Activated T-helper 1 cell treated with anti-CD3 and anti-CD28 coated beads, Interleukin-12 subunit alpha, Interleukin-12 subunit beta, Interleukin-2, Interleukin-4 antibody, amounts not matched to agents 30 ng/mL and 10 ng/mL and 1 ng/mL, durations not matched to agents 14 hours and 24 hours and 36 hours (primary cell): ENCODE measurements at regions of chr6 and their contacts with region 1.

Region 1: GRCh38 chr6:96468681-96469224 is 52.9 kb upstream of the UFL1 start:
- DNase-seq: no peak
- H3K4me3 Mint-ChIP-seq: no peak overlapping the region
- H3K27ac Mint-ChIP-seq: no peak overlapping the region
- H3K4me1 Mint-ChIP-seq: peaks cover 33% of the 10 kb centered on the region
- H3K27me3 Mint-ChIP-seq: peaks cover 19% of the 10 kb centered on the region

Region 2: GRCh38 chr6:95364016-95364604 is 1104.6 kb before region 1 on chr6:
- intact Hi-C with region 1: loop called (anchors 10 kb)
- DNase-seq: no peak
- H3K4me3 Mint-ChIP-seq: no peak overlapping the region
- H3K27ac Mint-ChIP-seq: no peak overlapping the region
- H3K4me1 Mint-ChIP-seq: no peaks in the 10 kb centered on the region
- H3K27me3 Mint-ChIP-seq: no peaks in the 10 kb centered on the region

Region 3: DNA sequence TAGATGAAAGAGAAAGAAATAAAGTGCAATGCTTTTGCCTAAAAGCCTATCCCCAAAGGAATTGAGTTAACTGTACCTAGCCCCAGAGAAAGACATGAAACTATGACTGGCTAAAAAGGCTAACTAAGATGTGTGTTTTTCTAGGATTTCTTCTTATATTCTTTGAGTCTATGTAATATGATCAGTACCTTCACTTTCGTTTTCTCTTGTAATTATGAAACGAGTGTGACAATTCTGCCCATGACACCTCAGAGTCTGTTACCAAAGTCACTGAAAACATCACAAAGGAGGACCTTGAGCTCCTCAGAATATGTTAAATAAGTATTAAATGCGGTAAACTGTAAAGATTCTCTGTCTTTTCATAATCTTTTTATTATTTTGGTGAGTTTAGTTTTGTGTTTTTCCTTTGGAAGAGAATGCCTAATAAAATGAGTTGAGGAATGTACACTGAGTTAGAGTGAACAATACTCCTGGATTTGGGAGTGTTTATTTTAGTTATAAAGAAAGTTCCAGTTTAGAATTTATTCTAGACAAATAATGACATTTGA is 311.7 kb before region 1 on chr6:
- intact Hi-C with region 1: loop called (anchors 5 kb)
- DNase-seq: no peak
- H3K4me3 Mint-ChIP-seq: no peak overlapping the region
- H3K27ac Mint-ChIP-seq: no peak overlapping the region
- H3K4me1 Mint-ChIP-seq: peaks cover 7% of the 10 kb centered on the region
- H3K27me3 Mint-ChIP-seq: no peaks in the 10 kb centered on the region

Region 4: GRCh38 chr6:96420294-96420693 is 48.5 kb before region 1 on chr6:
- intact Hi-C with region 1: loop called (anchors 5 kb)
- DNase-seq: no peak
- H3K4me3 Mint-ChIP-seq: no peak overlapping the region
- H3K27ac Mint-ChIP-seq: no peak overlapping the region
- H3K4me1 Mint-ChIP-seq: no peaks in the 10 kb centered on the region
- H3K27me3 Mint-ChIP-seq: peaks cover 4% of the 10 kb centered on the region

Region 5: GRCh38 chr6:96491926-96492325 is 23.2 kb after region 1 on chr6:
- intact Hi-C with region 1: no loop called
- DNase-seq: no peak
- H3K4me3 Mint-ChIP-seq: no peak overlapping the region
- H3K27ac Mint-ChIP-seq: no peak overlapping the region
- H3K4me1 Mint-ChIP-seq: no peaks in the 10 kb centered on the region
- H3K27me3 Mint-ChIP-seq: peaks cover 2% of the 10 kb centered on the region

Region 6: DNA sequence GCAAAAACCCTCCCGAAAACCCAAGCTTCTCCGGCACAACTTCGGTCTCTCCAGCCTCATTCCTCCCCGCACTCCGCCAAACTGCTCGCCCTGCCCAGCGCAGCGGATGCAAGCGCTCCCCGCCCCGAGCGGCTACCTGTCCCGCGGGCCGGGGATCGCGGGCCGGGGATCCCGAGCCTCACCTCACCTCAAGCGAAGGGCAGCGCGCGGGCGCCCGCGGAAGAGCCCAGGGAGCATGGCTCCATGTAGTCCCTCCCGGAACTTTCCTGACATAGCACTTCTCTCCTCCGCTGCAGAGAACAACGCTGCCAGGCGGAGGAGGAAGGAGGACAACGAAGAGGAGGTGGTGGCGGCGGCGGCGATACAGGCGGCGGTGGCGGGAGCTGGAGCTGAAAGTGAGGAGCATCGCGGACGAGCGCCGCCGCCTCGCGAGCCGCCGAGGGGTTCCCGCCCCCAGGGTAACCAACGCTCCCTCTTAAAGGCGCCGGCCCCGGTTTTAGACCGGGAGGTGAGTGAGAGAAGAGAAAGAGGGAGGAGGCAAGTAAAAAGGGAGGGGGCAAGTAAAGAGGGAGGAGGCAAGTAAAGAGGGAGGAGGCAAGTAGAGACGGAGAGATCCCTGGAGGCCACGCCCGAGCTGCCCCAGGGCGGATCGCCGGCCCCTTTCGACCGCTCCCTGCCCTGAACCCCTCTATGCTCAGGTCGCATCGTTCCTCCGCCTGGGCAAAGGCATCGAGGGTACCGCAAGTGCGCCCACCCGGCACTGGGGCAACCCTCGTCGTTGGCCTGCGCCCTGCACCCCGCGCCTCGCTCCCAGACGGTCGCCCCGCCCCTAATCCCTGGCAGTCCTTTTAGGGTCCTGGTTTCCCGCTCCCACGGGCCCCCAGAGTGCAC is 368.6 kb after region 1 on chr6 and contains the start of gene GPR63:
- intact Hi-C with region 1: loop called (anchors 1 kb)
- DNase-seq: peak; percentile 83
- H3K4me3 Mint-ChIP-seq: peak within 1 kb of the TSS; percentile 93
- H3K27ac Mint-ChIP-seq: peak within 1 kb of the TSS; percentile 73
- H3K4me1 Mint-ChIP-seq: peaks cover 41% of the 10 kb centered on the region
- H3K27me3 Mint-ChIP-seq: peaks cover 43% of the 10 kb centered on the region
- total RNA-seq, gene GPR63: 3.1 and 3.2 TPM in 2 replicates